ENCODE measurements at regions of chr19 and their contacts with region 1.

Region 1: GRCh38 chr19:46840136-46840942 is 10.3 kb downstream of the AP2S1 start:
- DNase-seq: peak; percentile 72
- CTCF ChIP-seq: peak; percentile 76

Region 2: GRCh38 chr19:46728693-46729676 is 111.4 kb before region 1 on chr19:
- CTCF ChIA-PET with region 1: interaction called, 13 read pairs
- POLR2A ChIA-PET with region 1: no interaction called
- DNase-seq: peak; percentile 91
- CTCF ChIP-seq: peak; percentile 96

Region 3: GRCh38 chr19:46759206-46759605 is 81.1 kb before region 1 on chr19:
- CTCF ChIA-PET with region 1: interaction called, 125 read pairs
- POLR2A ChIA-PET with region 1: no interaction called
- DNase-seq: no peak
- CTCF ChIP-seq: no peak

Region 4: DNA sequence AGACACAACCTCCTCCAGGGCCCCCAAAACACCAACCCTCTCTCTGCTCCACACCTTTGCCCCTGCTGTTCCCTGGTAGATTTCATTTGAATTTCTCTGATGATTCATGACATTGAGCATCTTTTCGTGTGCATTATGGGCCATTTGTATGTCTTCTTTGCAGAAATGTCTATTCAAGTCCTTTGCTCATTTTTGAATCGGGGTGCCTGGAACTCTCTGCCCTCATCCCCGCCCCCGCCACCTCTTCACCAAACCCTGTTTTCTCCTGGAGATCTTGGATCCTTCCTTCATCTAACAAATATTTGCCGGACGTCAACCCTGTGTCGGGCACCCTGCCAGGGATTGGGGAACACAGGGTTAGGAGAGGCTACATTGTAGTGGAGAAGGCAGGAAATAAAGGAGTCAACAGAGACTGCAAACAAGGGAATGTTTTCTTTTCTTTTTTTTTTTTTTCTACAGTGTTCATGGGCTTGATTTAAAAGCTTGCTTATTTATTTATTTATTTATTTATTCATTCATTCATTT is 26.4 kb before region 1 on chr19:
- CTCF ChIA-PET with region 1: interaction called, 10 read pairs
- POLR2A ChIA-PET with region 1: no interaction called
- DNase-seq: no peak
- CTCF ChIP-seq: no peak

Region 5: GRCh38 chr19:46850228-46851203 is 10.2 kb after region 1 on chr19 and contains the start of gene AP2S1:
- CTCF ChIA-PET with region 1: interaction called, 25 read pairs
- POLR2A ChIA-PET with region 1: interaction called, 10 read pairs
- DNase-seq: peak; percentile 96
- CTCF ChIP-seq: no peak

Measured in GM10248 (cell line).